Activated CD4-positive, alpha-beta T cell treated with anti-CD3 and anti-CD28 coated beads for 36 hours (primary cell): ENCODE measurements at regions of chr19 and their contacts with region 1.

Region 1: DNA sequence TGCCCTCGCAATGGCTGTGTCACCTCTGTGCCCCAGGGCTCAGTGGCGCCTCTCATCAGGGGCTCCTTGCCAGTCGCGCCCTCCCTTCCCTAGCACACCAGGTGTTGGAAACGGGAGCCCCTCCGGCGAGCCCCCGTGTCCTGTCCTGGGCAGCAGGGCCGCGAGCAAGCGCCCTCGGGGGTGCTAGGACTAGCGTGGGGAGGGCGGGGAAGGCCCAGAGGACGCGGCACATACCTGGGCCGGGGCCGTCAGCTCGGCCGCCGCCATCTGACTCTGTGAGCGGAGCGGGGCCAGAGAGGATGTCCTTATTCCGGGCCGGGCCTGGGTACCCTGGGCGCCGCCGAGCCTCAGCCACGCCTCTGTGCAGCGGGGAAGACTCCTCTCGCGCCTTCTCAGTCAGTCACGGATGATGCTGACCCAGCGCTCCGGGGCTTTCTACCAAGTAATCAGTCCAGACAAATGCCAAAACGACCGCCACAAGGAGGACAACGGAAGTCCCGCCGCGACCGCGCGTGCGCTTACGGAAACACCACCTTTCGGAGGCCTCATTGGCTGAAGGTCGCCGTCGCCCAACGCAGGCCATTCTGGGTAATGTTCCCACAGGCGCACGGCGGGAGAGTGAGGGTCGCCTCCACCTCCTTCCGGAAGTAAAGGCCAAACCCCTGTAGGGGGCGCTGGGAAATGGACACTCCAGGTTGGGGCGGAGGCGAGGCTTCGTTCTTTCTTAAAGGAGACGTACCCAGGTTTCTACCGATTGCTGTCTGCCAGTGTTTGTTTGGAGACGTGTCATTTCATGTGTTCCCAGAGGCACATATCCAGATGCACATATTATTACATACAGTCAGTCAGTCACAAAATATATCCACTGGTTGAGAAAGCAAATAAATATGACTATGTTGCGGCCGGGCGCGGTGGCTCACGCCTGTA is at the start of gene ZNF256:
- DNase-seq: peak; percentile 95
- ATAC-seq: peak; percentile 99
- H3K4me3 Mint-ChIP-seq: peak within 1 kb of the TSS; percentile 87
- H3K27ac Mint-ChIP-seq: peak within 1 kb of the TSS; percentile 90
- H3K4me1 Mint-ChIP-seq: peaks cover 16% of the 10 kb centered on the region
- H3K27me3 Mint-ChIP-seq: no peaks in the 10 kb centered on the region
- total RNA-seq, gene ZNF256: 6.3 to 6.9 TPM

Region 2: DNA sequence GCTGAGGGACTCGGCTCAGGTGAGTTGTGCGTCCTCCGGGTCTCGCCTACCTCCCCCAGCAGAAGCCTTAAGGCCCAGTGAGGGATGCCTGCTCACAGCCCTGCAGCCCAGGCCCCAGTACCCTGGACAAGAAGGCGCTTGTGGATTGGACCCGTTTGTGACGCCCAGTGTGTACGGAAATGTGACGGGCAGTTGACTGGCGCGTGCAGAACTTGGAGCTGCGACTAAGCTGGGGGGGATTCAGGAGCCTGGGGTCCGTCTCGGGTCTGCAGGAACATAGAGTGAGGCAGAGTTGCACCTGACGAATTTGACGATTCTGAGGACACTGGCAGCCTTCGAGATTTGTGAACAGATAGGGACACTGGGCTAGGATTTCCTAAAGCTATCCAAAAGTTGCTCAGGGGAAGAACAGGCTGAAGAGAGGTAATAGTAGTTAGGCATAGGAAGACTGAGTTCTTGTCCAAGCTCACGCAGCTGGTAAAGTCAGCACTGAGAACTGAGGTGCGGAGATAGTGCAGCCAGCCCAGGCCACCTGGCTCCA is 265.2 kb before region 1 on chr19:
- CTCF ChIA-PET with region 1: no interaction called
- POLR2A ChIA-PET with region 1: no interaction called
- intact Hi-C with region 1: loop called in 1 of 2 experiments (anchors 5 kb)
- DNase-seq: no peak
- ATAC-seq: no peak
- H3K4me3 Mint-ChIP-seq: peak overlapping the region; percentile 85
- H3K27ac Mint-ChIP-seq: peak overlapping the region; percentile 93
- H3K4me1 Mint-ChIP-seq: peaks cover 31% of the 10 kb centered on the region
- H3K27me3 Mint-ChIP-seq: peaks cover under 1% of the 10 kb centered on the region

Region 3: DNA sequence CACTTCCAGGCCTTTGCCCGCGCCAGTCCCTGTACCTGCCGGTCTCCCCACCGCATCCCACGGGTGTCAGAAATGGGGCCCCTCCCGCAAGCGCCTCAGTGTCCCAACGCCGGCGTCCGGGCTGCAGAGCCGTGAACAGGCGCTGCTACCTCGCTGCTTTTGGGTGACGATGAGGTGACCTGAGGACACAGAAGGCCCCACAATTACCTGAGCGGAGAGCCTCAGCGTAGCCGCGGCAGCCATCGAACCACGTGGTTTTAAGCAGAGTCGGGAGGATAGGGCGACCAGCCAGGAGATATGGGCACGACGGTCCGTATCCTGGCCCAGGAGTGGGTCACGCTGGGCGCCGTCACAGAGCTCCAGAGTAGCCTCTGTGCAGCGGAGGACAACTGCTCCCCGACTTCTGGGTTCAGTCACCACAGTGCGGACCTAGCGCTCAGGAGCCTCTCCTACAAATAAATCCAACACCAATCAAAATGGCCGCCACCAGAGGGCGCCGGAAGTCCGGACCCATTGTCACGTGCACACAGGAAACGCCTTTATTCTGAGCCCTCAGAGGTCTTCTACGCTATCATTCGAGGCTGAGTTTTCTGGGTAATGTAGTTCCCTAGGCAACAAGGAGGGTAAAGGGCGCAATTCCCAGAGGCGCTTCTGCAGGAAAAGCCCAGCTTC is 58.8 kb before region 1 on chr19 and contains the start of gene ZNF814:
- CTCF ChIA-PET with region 1: no interaction called
- POLR2A ChIA-PET with region 1: no interaction called
- intact Hi-C with region 1: loop called in 1 of 2 experiments (anchors 2 kb)
- DNase-seq: peak; percentile 91
- ATAC-seq: peak; percentile 94
- H3K4me3 Mint-ChIP-seq: peak within 1 kb of the TSS; percentile 96
- H3K27ac Mint-ChIP-seq: peak within 1 kb of the TSS; percentile 92
- H3K4me1 Mint-ChIP-seq: peaks cover 23% of the 10 kb centered on the region
- H3K27me3 Mint-ChIP-seq: no peaks in the 10 kb centered on the region
- total RNA-seq, gene ZNF814: 24.1 to 24.5 TPM

Region 4: GRCh38 chr19:57934820-57935665 is 12.4 kb before region 1 on chr19 and contains the start of gene ZNF418:
- CTCF ChIA-PET with region 1: interaction called, 3 read pairs
- POLR2A ChIA-PET with region 1: no interaction called
- intact Hi-C with region 1: loop called in 1 of 2 experiments (anchors 1 kb)
- DNase-seq: peak; percentile 72
- ATAC-seq: peak; percentile 99
- H3K4me3 Mint-ChIP-seq: peak within 1 kb of the TSS; percentile 83
- H3K27ac Mint-ChIP-seq: peak within 1 kb of the TSS; percentile 90
- H3K4me1 Mint-ChIP-seq: peaks cover 9% of the 10 kb centered on the region
- H3K27me3 Mint-ChIP-seq: no peaks in the 10 kb centered on the region
- total RNA-seq, gene ZNF418: 4.6 to 4.8 TPM

Region 5: GRCh38 chr19:58097781-58098681 is 150.6 kb after region 1 on chr19 and contains the start of gene ZSCAN18:
- CTCF ChIA-PET with region 1: no interaction called
- POLR2A ChIA-PET with region 1: no interaction called
- intact Hi-C with region 1: loop called in 1 of 2 experiments (anchors 1 kb)
- DNase-seq: peak; percentile 97
- ATAC-seq: peak; percentile 99
- H3K4me3 Mint-ChIP-seq: peak within 1 kb of the TSS; percentile 82
- H3K27ac Mint-ChIP-seq: peak within 1 kb of the TSS; percentile 97
- H3K4me1 Mint-ChIP-seq: peaks cover 13% of the 10 kb centered on the region
- H3K27me3 Mint-ChIP-seq: no peaks in the 10 kb centered on the region
- total RNA-seq, gene ZSCAN18: 23.1 to 29.2 TPM